ENCODE measurements at regions of chr12 and their contacts with region 1.

Region 1: DNA sequence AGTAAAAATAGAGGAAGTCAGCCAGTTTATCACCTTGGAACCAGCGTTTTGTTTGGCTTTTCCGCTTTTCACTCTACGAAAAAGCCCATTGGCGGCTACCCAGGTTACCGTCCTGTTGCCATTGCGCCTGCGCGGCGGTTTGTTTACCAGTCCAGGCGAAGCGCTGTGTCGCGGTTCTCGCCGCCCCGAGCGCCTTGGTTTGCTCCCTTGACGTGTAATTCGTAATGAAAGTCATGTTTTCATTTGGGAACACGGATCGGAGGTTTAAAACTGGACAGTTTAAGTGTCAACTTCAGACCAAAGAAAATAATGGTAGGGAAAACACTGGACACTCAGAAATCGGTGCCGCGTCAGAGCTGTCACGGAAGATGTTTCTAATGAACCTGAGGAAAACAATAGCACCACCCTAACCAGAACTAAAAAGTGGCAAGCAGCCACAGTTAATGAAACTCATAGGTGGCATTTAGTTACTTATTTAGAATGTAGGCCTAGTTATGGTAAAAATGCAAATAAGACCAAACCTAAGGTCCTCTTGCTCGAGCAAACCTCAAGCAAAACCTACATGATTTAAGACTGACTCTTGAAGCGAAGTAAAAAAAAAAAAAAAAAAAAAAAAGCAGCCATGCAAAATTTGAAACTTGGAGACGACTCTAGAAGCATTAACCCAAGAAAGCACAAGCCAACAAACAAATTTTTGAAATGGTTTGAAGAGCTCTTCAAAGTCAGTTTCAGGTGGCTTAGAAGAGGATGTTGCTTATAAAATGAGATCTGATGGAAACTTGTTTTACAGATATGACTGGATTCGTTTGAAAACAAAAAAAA is 790 bp upstream of the GPR19 start:
- DNase-seq: peak; percentile 61
- H3K4me3 ChIP-seq: peak overlapping the region; percentile 67
- H3K27ac ChIP-seq: peak overlapping the region; percentile 93
- H3K27me3 ChIP-seq: peaks cover 8% of the 10 kb centered on the region
- CTCF ChIP-seq: 0 out of 2 replicates have a peak, but pooled peaks have one; percentile 8

Region 2: DNA sequence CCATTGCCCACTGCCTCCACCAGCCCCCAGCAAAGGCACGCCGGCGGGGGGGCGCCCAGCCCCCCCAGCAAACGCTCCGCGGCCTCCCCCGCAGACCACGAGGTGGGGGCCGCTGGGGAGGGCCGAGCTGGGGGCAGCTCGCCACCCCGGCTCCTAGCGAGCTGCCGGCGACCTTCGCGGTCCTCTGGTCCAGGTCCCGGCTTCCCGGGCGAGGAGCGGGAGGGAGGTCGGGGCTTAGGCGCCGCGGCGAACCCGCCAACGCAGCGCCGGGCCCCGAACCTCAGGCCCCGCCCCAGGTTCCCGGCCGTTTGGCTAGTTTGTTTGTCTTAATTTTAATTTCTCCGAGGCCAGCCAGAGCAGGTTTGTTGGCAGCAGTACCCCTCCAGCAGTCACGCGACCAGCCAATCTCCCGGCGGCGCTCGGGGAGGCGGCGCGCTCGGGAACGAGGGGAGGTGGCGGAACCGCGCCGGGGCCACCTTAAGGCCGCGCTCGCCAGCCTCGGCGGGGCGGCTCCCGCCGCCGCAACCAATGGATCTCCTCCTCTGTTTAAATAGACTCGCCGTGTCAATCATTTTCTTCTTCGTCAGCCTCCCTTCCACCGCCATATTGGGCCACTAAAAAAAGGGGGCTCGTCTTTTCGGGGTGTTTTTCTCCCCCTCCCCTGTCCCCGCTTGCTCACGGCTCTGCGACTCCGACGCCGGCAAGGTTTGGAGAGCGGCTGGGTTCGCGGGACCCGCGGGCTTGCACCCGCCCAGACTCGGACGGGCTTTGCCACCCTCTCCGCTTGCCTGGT is 20.2 kb after region 1 on chr12 and contains the start of gene CDKN1B:
- CTCF ChIA-PET with region 1: no interaction called
- POLR2A ChIA-PET with region 1: interaction called, 11 read pairs
- DNase-seq: peak; percentile 88
- H3K4me3 ChIP-seq: peak within 1 kb of the TSS; percentile 96
- H3K27ac ChIP-seq: peak within 1 kb of the TSS; percentile 95
- H3K27me3 ChIP-seq: no peaks in the 10 kb centered on the region
- CTCF ChIP-seq: no peak
- polyA plus RNA-seq, gene CDKN1B: 17.9 and 23.1 TPM in 2 replicates

Measured in AG04450 (cell line).